Left lung (tissue), 14 donors: ENCODE measurements at regions of chr22 and their contacts with region 1.

Region 1: DNA sequence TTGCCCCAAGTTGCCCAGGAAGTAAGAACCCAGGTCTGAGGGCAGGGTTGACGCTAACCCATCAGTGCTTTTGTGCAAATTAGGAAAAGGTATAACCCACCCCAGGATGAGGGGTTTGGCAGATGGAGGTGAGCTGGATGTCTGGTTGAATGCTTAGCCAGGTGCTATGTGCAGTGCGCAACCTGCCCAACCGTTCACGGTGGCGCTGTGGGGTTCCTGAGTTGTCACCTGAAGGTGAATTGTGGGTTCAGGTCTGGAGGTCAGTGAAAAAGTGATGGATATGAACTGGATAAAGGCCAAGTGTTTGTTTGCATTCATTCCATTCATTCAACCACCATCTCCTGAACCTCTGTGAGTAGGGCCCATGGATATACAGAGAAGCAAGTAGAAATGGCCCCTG is 14.3 kb upstream of the LGALS2 start:
- DNase-seq: no peak
- ATAC-seq: no peak
- H3K4me3 ChIP-seq: no peak overlapping the region
- H3K27ac ChIP-seq: no peak overlapping the region
- H3K4me1 ChIP-seq: peaks cover 0 to 38% of the 10 kb centered on the region in 2 donors
- H3K27me3 ChIP-seq: no peaks in the 10 kb centered on the region
- CTCF ChIP-seq: no peak

Region 2: GRCh38 chr22:37538590-37539357 is 55.5 kb before region 1 on chr22:
- intact Hi-C with region 1: loop called in 1 of 2 experiments (anchors 5 kb)
- DNase-seq: peak; percentile 85 to 98 (median 96)
- ATAC-seq: peak; percentile 97
- H3K4me3 ChIP-seq: no peak overlapping the region
- H3K27ac ChIP-seq: peak overlapping the region in 1 of 2 donors; percentile 33
- H3K4me1 ChIP-seq: peaks cover 6 to 40% of the 10 kb centered on the region in 2 donors
- H3K27me3 ChIP-seq: no peaks in the 10 kb centered on the region
- CTCF ChIP-seq: peak; percentile 96 to 98

Region 3: GRCh38 chr22:37726241-37726887 is 132.1 kb after region 1 on chr22:
- intact Hi-C with region 1: no loop called
- DNase-seq: no peak
- ATAC-seq: no peak
- H3K4me3 ChIP-seq: no peak overlapping the region
- H3K27ac ChIP-seq: no peak overlapping the region
- H3K4me1 ChIP-seq: peaks cover 7 to 30% of the 10 kb centered on the region in 2 donors
- H3K27me3 ChIP-seq: no peaks in the 10 kb centered on the region
- CTCF ChIP-seq: no peak

Region 4: DNA sequence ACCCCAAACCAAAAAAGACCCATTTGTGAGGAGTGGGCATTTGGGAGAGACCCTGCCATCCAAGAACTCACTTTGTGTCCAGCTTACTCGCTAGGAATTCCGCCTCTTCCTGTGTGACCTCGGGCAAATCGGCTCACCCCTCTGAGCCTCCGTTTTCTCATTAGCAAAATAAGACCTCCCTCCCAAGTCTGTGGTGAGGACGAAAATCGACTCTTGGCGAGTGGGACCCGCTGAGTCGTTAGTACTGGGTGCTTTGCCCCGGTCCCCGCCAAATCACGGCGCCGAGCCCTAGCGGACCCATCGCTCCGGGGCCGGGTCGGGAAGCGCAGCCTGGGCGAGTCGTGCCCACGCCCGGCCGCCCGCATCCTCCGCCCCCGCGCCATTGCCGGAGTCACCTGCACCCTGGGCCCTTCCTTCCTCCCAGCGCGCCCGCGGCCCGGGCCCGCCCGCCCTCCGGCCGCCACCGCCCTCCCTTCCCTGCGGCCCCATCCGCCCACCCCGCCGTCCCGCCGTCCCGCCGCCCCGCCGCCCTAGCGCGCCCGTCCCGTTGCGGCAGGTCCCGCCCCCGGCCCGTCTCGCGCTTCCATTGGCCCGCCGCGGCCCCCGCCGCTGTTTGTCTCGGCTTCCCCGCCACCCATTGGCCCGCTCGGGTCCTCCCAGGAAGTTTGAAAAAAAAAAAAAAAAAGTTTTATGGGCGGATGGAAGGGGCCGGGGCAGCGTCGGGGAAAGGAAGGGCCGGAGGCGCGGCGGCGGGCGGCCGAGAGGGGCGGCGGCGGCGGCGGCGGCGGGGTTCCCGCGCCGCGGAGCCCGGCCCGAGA is 151.5 kb after region 1 on chr22:
- intact Hi-C with region 1: no loop called
- DNase-seq: peak; percentile 75 to 95 (median 92)
- ATAC-seq: peak; percentile 77
- H3K4me3 ChIP-seq: peak overlapping the region; percentile 70 to 92
- H3K27ac ChIP-seq: peak overlapping the region; percentile 92
- H3K4me1 ChIP-seq: peaks cover 33 to 79% of the 10 kb centered on the region in 2 donors
- H3K27me3 ChIP-seq: no peaks in the 10 kb centered on the region
- CTCF ChIP-seq: no peak